T-cell (primary cell): ENCODE measurements at regions of chr12 and their contacts with region 1.

Region 1: GRCh38 chr12:130335517-130336392 is 1.9 kb upstream of the PIWIL1 start:
- DNase-seq: peak in 10 of 35 experiments; percentile 5 to 64 (median 17)
- ATAC-seq: no peak
- H3K4me3 ChIP-seq: no peak overlapping the region
- H3K4me3 Mint-ChIP-seq: no peak overlapping the region
- H3K27ac ChIP-seq: no peak overlapping the region
- H3K27ac Mint-ChIP-seq: no peak overlapping the region
- H3K4me1 ChIP-seq: no peaks in the 10 kb centered on the region
- H3K4me1 Mint-ChIP-seq: peaks cover 0 to 9% (median 0%) of the 10 kb centered on the region in 3 donors
- H3K27me3 ChIP-seq: peaks cover 0 to 37% of the 10 kb centered on the region in 2 experiments
- H3K27me3 Mint-ChIP-seq: peaks cover 14 to 24% of the 10 kb centered on the region in 2 donors

Region 2: DNA sequence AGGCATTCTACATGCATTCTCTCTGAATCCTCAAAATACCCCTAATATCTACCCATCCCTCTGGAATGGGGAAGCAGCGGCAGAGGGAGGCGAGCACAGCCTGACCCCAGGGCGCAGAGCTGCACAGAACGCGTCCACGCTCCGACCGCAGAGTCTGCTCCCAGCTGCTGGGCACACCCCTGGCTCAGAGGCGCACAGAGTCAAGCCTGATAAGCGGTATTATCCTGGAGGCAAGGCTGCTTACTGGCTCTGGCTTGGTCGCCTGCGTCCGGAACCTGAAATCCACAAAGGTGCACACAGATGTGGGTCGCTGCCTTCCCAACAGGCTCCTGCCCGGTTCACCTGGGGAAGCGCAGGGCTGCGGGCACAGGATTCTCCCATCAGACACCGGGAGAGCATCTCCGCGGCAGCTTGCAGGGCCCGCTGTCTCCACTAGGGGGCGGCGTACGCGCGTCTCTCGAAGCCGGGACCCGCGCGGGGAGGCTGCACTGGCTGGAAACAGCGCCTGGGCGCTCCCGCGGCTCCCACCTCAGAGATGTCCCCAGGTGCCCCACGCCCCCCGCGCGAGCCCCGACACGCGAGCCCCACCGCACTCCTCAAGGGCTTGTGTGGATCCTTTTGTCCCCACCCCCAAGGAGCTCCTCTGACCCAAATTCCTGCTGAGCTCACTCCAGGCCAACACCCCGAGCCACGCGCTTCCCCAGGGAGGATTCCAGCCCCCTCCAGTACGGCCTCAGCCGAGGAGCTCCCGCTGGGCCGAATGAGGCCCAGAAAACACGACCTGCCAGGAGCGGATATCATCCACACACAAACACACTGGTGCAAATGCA is 293.6 kb before region 1 on chr12:
- CTCF ChIA-PET with region 1: interaction called in 1 of 2 experiments, 18 read pairs
- POLR2A ChIA-PET with region 1: no interaction called
- DNase-seq: peak in 22 of 35 experiments; percentile 4 to 47 (median 28)
- ATAC-seq: no peak
- H3K4me3 ChIP-seq: no peak overlapping the region
- H3K4me3 Mint-ChIP-seq: no peak overlapping the region
- H3K27ac ChIP-seq: no peak overlapping the region
- H3K27ac Mint-ChIP-seq: no peak overlapping the region
- H3K4me1 ChIP-seq: no peaks in the 10 kb centered on the region
- H3K4me1 Mint-ChIP-seq: peaks cover 0 to 5% (median 0%) of the 10 kb centered on the region in 3 donors
- H3K27me3 ChIP-seq: peaks cover 2 to 36% of the 10 kb centered on the region in 2 experiments
- H3K27me3 Mint-ChIP-seq: peaks cover 52 to 55% of the 10 kb centered on the region in 2 donors